ENCODE measurements at regions of chr1 and their contacts with region 1.

Region 1: GRCh38 chr1:209428241-209428921 is 155.1 kb upstream of the CAMK1G start:
- DNase-seq: peak; percentile 93
- H3K27ac ChIP-seq: peak overlapping the region; percentile 100
- CTCF ChIP-seq: no peak

Region 2: DNA sequence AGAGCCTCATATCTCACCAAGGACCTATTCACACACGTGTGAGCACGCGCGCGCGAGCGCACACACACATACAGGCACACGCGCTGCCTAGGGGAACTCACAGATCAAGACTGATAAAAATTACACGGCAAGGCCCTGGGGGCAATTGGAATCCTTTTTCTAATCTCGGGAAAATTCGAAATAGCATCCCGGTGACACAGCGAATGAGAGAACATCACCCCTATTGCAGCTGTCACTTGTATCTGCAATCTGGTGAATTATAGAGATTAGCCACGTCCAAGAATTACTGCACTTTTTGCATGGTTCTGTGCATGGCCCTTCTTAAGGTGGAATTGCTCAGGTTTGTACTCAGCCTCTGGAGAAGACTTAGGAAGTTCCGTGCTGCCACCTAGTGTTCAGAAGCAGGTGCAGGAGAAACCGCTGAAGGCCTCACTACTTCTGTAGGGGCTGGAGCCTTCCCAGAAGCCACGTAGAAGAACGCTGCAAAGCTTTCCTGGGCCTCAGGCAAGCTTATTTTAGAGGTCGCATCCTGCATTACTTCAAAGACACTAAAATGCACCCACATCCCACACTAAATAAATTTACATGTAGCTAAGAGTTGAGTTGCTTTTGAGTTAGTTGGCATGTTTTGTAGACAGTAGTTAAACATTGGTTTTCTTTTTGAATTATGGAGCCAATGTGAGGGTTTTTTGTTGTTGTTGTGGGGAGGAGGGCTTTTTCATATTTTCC is 74.1 kb before region 1 on chr1:
- CTCF ChIA-PET with region 1: interaction called, 8 read pairs
- POLR2A ChIA-PET with region 1: interaction called, 12 read pairs
- DNase-seq: peak; percentile 86
- H3K27ac ChIP-seq: peak overlapping the region; percentile 95
- CTCF ChIP-seq: peak; percentile 86

Region 3: GRCh38 chr1:209368864-209369598 is 59.4 kb before region 1 on chr1:
- CTCF ChIA-PET with region 1: no interaction called
- POLR2A ChIA-PET with region 1: interaction called, 13 read pairs
- DNase-seq: peak; percentile 74
- H3K27ac ChIP-seq: peak overlapping the region; percentile 93
- CTCF ChIP-seq: no peak

Region 4: DNA sequence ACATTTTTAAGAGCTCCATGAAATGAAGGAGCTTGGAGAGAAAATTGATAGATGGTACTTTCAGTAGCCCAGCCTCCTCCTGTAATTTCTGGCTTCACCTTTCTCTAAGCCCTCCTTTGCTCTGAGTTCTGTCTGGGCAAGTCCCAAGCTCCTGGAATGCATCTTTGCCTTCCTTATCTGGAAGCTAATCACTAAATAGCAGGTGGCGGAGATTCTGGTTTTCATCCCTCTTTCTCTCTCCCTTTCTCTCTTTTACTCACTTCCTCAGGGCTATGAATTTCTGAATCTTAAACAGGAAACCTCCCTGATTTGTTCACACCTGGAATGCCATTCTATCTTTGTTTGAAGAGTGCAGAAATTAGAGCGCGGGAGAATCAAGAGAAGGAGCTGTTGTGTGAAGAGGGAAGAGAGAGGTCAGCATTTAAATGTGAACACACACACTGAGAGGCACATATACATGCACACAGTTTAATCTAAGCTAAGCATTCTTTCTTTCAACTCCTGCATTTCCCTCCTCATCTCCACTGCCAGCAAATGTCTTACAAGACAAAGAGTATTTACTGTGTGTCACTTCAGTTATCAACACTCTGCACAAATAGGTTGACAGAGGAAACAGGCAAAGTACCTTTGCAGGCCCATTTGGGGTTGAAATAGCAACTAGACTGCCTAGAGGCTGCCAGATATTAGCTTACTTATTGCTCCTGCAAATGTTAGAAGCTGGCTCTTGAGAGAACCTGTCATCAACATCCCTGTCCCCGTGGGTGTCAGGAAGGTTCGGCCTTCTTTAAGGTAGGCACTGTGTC is 44.3 kb before region 1 on chr1:
- CTCF ChIA-PET with region 1: interaction called, 7 read pairs
- POLR2A ChIA-PET with region 1: interaction called, 21 read pairs
- DNase-seq: peak; percentile 48
- H3K27ac ChIP-seq: peak overlapping the region; percentile 87
- CTCF ChIP-seq: no peak

Region 5: GRCh38 chr1:209398313-209398991 is 29.9 kb before region 1 on chr1:
- CTCF ChIA-PET with region 1: no interaction called
- POLR2A ChIA-PET with region 1: interaction called, 30 read pairs
- DNase-seq: peak; percentile 88
- H3K27ac ChIP-seq: peak overlapping the region; percentile 93
- CTCF ChIP-seq: no peak

Region 6: DNA sequence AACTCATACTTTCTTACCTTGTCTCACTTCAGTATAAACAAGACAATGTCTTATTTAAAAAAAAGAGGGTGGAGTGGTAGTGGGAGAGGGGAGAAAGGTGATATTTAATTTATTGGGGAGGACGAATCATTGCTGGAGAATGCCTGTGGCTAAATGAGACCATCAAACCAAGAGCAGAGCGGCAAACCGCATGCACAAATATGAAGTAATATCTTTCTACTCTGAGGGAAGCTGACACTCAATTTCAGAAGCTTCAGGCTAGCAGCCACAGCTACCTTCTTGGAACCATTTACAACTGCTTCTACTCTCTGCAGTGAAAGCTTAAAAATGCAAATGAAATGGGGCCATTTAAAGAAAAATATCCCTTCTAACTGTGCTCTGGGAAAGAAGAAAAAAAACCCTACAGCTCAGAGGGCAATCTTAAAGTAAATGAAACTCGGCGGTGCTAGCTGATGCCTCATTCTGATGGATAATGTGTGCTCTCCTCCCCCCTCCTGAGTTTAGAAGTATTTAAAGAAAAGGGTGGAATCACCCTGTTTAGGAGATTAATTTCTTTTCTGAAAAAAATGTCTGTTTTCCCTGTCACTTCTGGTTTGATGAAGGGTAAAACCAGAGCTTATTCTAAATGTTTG is 23.1 kb before region 1 on chr1:
- CTCF ChIA-PET with region 1: no interaction called
- POLR2A ChIA-PET with region 1: interaction called, 30 read pairs
- DNase-seq: no peak
- H3K27ac ChIP-seq: no peak overlapping the region
- CTCF ChIP-seq: no peak

Region 7: GRCh38 chr1:209411491-209411929 is 16.9 kb before region 1 on chr1:
- CTCF ChIA-PET with region 1: interaction called, 3 read pairs
- POLR2A ChIA-PET with region 1: interaction called, 67 read pairs
- DNase-seq: peak; percentile 86
- H3K27ac ChIP-seq: peak overlapping the region; percentile 99
- CTCF ChIP-seq: no peak

Region 8: DNA sequence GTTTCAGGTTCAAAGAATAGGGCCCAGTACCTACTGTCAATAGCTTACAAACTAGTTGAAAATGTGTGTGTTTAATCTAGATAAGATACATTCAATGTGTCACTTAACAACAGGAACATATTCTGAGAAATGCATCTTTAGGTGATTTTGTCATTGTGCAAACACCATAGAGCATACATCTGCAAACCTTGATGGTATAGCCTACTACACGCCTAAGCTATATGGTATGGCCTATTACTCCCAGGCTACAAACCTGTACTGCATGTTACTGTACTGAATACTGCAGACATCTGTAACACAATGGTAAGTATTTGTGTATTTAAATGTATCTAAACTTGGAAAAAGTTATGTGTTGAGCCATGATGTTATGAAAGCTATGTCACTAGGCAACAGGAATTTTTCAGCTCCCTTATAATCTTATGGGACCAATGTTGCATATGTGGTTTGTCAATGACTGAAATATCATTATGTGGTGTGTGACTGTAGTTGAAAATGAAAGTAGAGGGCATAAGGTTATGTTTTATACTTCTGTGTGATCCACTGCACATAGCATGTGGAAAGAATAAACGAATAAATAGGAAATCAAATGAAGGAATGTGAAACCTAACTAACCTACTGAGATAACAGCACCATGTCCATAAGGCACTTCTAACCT is 26.1 kb after region 1 on chr1:
- CTCF ChIA-PET with region 1: no interaction called
- POLR2A ChIA-PET with region 1: no interaction called
- DNase-seq: no peak
- H3K27ac ChIP-seq: no peak overlapping the region
- CTCF ChIP-seq: no peak

Region 9: DNA sequence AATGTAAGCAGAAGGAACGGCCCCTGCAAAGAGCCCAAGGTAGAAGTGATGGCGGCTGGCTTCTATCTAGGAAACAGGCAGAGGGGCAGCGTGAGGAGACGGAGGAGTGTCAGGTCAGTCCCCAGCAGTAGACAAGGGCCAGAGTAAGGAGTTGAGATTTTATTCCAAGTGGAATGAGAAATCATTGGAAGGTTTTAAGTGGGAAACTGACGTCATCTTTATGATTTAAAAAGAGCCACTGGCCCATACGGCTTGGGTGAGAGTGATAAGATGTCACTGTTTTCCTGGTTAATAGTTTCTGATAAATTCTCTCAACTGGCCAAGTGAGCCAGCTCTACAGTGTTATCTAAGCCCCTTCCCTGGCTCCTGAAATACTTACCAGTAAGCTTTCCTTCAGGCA is 52.0 kb after region 1 on chr1:
- CTCF ChIA-PET with region 1: no interaction called
- POLR2A ChIA-PET with region 1: no interaction called
- DNase-seq: no peak
- H3K27ac ChIP-seq: no peak overlapping the region
- CTCF ChIP-seq: no peak

Measured in RWPE1 (cell line).